HCT116 (cell line): ENCODE measurements at regions of chr2 and their contacts with region 1.

Region 1: DNA sequence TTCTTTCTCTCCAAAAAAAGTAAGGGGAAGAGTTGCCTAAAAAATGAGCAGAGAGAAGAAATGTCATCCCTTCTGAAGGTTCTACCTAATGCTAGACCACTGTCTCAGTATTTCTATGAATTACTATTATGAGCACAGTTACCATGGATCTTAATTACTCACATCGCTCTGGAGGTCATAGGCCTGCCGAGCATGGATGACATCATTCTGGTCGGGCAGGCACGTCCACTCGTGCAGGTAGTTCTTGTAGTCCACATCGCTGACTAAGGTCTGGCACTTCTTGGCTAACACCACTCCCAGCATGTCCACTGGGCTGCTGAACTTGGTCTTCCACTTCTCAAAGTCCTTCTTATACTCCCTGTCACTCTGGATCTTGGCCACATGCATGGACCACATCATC is 106.9 kb downstream of the NEB start:
- DNase-seq: no peak
- ATAC-seq: no peak
- H3K4me3 ChIP-seq: no peak overlapping the region
- H3K27ac ChIP-seq: no peak overlapping the region
- H3K4me1 ChIP-seq: no peaks in the 10 kb centered on the region
- H3K27me3 ChIP-seq: no peaks in the 10 kb centered on the region
- CTCF ChIP-seq: no peak
- POLR2A ChIP-seq: no peak
- RAD21 ChIP-seq: no peak

Region 2: GRCh38 chr2:150601280-150602038 is 1025.9 kb before region 1 on chr2:
- CTCF ChIA-PET with region 1: no interaction called
- POLR2A ChIA-PET with region 1: no interaction called
- RAD21 ChIA-PET with region 1: no interaction called
- intact Hi-C with region 1: loop called (anchors 10 kb)
- DNase-seq: no peak
- ATAC-seq: no peak
- H3K4me3 ChIP-seq: no peak overlapping the region
- H3K27ac ChIP-seq: no peak overlapping the region
- H3K4me1 ChIP-seq: no peaks in the 10 kb centered on the region
- H3K27me3 ChIP-seq: no peaks in the 10 kb centered on the region
- CTCF ChIP-seq: no peak
- POLR2A ChIP-seq: no peak
- RAD21 ChIP-seq: no peak